ENCODE measurements at regions of chr2 and their contacts with region 1.

Region 1: GRCh38 chr2:75632091-75632701 is 14.4 kb upstream of the MRPL19 start:
- DNase-seq: no peak
- H3K4me3 ChIP-seq: no peak overlapping the region
- H3K27ac ChIP-seq: peak overlapping the region in 1 of 2 donors; percentile 22
- H3K4me1 ChIP-seq: no peaks in the 10 kb centered on the region
- H3K27me3 ChIP-seq: no peaks in the 10 kb centered on the region
- CTCF ChIP-seq: no peak
- POLR2A ChIP-seq: no peak

Region 2: GRCh38 chr2:75705921-75706320 is 73.7 kb after region 1 on chr2:
- intact Hi-C with region 1: loop called (anchors 2 kb)
- DNase-seq: no peak
- H3K4me3 ChIP-seq: no peak overlapping the region
- H3K27ac ChIP-seq: no peak overlapping the region
- H3K4me1 ChIP-seq: no peaks in the 10 kb centered on the region
- H3K27me3 ChIP-seq: no peaks in the 10 kb centered on the region
- CTCF ChIP-seq: no peak
- POLR2A ChIP-seq: no peak

Region 3: GRCh38 chr2:77232909-77233425 is 1600.8 kb after region 1 on chr2:
- intact Hi-C with region 1: loop called (anchors 10 kb)
- DNase-seq: no peak
- H3K4me3 ChIP-seq: no peak overlapping the region
- H3K27ac ChIP-seq: no peak overlapping the region
- H3K4me1 ChIP-seq: no peaks in the 10 kb centered on the region
- H3K27me3 ChIP-seq: no peaks in the 10 kb centered on the region
- CTCF ChIP-seq: no peak
- POLR2A ChIP-seq: no peak